GM23248 (cell line): ENCODE measurements at regions of chr2 and their contacts with region 1.

Region 1: DNA sequence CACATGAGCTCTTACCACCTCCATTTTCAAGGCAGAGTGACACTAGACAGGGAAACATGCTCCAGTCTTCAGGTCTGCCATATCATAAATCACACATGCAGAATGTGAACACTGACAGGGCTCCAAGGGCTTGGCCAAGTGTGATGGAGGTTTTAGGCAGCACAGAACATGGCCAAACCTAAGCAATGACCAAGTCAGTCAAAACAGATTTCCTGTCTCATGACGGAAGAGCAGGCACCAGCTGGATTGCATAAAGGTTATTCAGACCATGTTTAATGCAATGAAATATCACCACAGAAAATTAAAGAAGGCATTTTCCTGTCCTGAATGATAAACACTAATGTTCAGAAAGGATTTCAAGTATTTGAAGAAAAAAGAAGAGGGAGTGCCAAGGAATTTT is 72.5 kb downstream of the SUMO1 start:
- DNase-seq: peak; percentile 24
- H3K4me3 ChIP-seq: no peak overlapping the region
- H3K27ac ChIP-seq: no peak overlapping the region
- H3K4me1 ChIP-seq: no peaks in the 10 kb centered on the region; the same call in 1 of the 2 replicates
- H3K27me3 ChIP-seq: no peaks in the 10 kb centered on the region

Region 2: GRCh38 chr2:202033321-202034248 is 132.4 kb before region 1 on chr2 and contains the start of gene FZD7:
- in situ Hi-C with region 1: loop called (anchors 5 kb)
- DNase-seq: peak; percentile 97
- H3K4me3 ChIP-seq: peak within 1 kb of the TSS; percentile 90
- H3K27ac ChIP-seq: peak within 1 kb of the TSS; percentile 89
- H3K4me1 ChIP-seq: peaks cover 26% of the 10 kb centered on the region
- H3K27me3 ChIP-seq: no peaks in the 10 kb centered on the region
- total RNA-seq, gene FZD7: 53.7 and 56.4 TPM in 2 replicates